B cell (primary cell): ENCODE measurements at regions of chr1 and their contacts with region 1.

Region 1: GRCh38 chr1:116724765-116725375 is 29.4 kb upstream of the CD2 start:
- DNase-seq: peak; percentile 67
- ATAC-seq: no peak
- H3K4me3 ChIP-seq: no peak overlapping the region
- H3K4me3 Mint-ChIP-seq: no peak overlapping the region
- H3K27ac ChIP-seq: no peak overlapping the region
- H3K27ac Mint-ChIP-seq: no peak overlapping the region
- H3K4me1 ChIP-seq: no peaks in the 10 kb centered on the region
- H3K4me1 Mint-ChIP-seq: peaks cover 7% of the 10 kb centered on the region
- H3K27me3 ChIP-seq: no peaks in the 10 kb centered on the region
- H3K27me3 Mint-ChIP-seq: no peaks in the 10 kb centered on the region
- CTCF ChIP-seq: peak; percentile 89

Region 2: DNA sequence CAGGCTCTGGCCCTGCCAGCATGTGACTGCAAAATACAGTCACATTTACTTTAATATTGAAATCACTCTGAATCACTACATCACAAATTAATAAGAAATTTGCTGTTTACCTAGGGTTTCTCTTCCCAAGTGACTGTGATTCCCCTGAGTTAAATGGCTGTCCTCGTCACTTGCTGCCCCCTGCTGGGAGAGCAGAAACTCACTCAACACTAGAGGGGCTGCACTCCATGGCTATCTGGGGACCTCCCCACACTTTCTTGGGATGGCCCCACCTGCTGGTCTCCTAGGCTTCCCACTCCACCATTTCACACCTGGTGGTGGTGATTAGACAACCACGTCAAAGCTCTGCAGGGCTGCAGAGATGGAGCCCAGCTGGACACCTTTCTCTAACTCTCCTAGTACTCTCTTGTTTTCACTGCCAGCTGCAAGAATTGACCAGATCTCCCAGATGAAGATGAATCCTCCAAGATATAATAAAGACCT is 92.8 kb after region 1 on chr1:
- CTCF ChIA-PET with region 1: interaction called, 14 read pairs
- POLR2A ChIA-PET with region 1: no interaction called
- intact Hi-C with region 1: no loop called
- DNase-seq: peak; percentile 58
- ATAC-seq: peak; percentile 45
- H3K4me3 ChIP-seq: no peak overlapping the region
- H3K4me3 Mint-ChIP-seq: no peak overlapping the region
- H3K27ac ChIP-seq: no peak overlapping the region
- H3K27ac Mint-ChIP-seq: no peak overlapping the region
- H3K4me1 ChIP-seq: peaks cover 2 to 4% of the 10 kb centered on the region in 2 donors
- H3K4me1 Mint-ChIP-seq: peaks cover 2% of the 10 kb centered on the region
- H3K27me3 ChIP-seq: no peaks in the 10 kb centered on the region
- H3K27me3 Mint-ChIP-seq: no peaks in the 10 kb centered on the region
- CTCF ChIP-seq: peak; percentile 58

Region 3: GRCh38 chr1:117051224-117052064 is 326.6 kb after region 1 on chr1:
- CTCF ChIA-PET with region 1: interaction called, 49 read pairs
- POLR2A ChIA-PET with region 1: no interaction called
- intact Hi-C with region 1: loop called (anchors 1 kb)
- DNase-seq: peak; percentile 52
- ATAC-seq: peak; percentile 31
- H3K4me3 ChIP-seq: peak overlapping the region in 3 of 5 experiments; percentile 8 to 47 (median 28)
- H3K4me3 Mint-ChIP-seq: peak overlapping the region; percentile 79
- H3K27ac ChIP-seq: peak overlapping the region; percentile 37 to 64
- H3K27ac Mint-ChIP-seq: peak overlapping the region; percentile 88
- H3K4me1 ChIP-seq: peaks cover 45 to 46% of the 10 kb centered on the region in 2 donors
- H3K4me1 Mint-ChIP-seq: peaks cover 43% of the 10 kb centered on the region
- H3K27me3 ChIP-seq: no peaks in the 10 kb centered on the region
- H3K27me3 Mint-ChIP-seq: no peaks in the 10 kb centered on the region
- CTCF ChIP-seq: no peak